Activated naive CD4-positive, alpha-beta T cell treated with anti-CD3 and anti-CD28 coated beads for 36 hours (primary cell): ENCODE measurements at regions of chr19 and their contacts with region 1.

Region 1: DNA sequence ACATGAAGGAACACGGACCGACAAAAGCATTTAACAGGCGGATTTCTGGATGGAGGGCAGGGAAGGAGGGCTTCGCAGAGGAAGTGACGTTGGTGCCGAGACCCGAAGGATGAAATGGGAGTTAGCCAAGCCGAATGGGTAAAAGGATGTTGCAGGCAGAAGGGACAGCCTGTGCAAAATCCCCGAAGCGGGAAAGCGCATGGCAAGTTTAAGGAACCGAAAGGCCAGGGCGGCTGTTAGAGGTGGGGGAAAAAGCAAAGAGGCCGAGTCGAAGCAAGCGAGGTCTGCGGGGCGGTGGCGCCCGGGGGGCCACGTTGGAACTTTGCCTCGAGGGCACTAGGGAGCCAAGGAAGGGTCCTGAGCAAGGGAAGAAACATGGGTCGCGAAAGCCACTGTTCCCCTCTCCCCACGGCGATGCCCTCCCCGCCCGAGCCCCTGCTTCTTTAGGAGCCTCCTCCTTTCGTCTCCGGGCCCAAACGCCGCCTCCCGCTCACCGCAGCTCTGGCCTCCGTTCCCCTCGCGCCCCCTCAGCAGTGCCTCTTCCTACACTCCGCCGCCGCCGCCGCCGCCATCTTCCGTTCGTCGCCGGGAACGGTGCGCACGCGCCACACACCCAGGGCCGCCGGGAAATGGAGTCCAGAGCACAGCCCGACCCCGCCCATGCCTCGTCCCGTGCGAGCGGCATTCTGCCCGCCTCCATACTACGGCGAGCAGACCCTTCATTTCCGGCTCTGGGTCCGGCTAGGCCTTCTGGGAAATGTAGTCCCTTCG is at the start of gene SYMPK:
- DNase-seq: peak; percentile 99
- H3K4me3 Mint-ChIP-seq: peak within 1 kb of the TSS; percentile 88
- H3K27ac Mint-ChIP-seq: peak within 1 kb of the TSS; percentile 94
- H3K4me1 Mint-ChIP-seq: peaks cover 24% of the 10 kb centered on the region
- H3K27me3 Mint-ChIP-seq: peaks cover 23% of the 10 kb centered on the region
- total RNA-seq, gene SYMPK: 96.9 to 97.4 TPM

Region 2: GRCh38 chr19:45469132-45469944 is 393.4 kb before region 1 on chr19:
- CTCF ChIA-PET with region 1: no interaction called
- intact Hi-C with region 1: loop called (anchors 2 kb)
- DNase-seq: peak; percentile 91
- H3K4me3 Mint-ChIP-seq: peak overlapping the region; percentile 77
- H3K27ac Mint-ChIP-seq: peak overlapping the region; percentile 75
- H3K4me1 Mint-ChIP-seq: peaks cover 42% of the 10 kb centered on the region
- H3K27me3 Mint-ChIP-seq: peaks cover 26% of the 10 kb centered on the region

Region 3: DNA sequence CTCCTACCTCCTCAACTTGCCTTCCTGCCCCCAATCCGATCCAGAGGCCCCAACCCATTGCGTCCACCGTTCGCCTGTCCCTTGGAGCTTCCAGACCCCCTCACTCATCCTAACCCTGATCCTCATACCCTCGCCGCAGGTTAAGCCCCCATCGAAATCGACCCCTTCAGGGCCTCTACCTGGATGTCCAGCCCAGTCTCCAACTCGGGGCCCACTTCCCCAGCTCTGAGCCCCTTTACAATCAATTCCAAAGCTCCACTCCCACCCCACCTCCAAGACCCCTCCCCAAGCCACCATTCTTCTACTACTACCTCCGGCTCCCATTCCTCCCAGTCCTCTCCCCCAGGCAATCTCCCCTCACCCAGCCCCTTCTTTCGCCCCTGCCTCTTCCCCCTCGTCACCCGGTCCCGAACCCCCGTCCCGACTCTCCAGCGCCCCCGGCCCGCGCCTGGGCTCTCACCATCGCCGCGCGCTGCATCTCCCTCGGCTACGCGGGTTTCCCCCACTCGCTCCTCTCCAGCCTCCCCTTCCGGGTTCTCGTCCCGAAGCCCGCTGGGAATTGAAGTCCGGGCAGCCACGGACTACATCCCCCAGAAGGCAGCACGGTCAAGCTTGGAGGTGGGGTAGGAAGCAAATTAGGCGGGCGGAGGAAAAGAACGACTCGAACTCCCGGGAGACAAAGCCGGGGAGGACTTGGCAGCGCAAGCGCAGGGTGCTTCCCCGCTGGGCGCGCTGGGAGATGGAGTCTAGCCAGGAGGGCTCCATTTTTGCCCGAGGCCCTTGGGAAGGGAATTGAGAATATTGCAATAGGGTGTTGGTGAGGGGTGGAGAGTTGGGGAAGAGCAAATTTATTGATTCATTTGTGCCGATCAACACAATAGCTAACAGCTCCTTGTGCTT is 132.1 kb before region 1 on chr19 and contains the start of gene FBXO46:
- CTCF ChIA-PET with region 1: interaction called, 4 read pairs
- intact Hi-C with region 1: loop called (anchors 1 kb)
- DNase-seq: peak; percentile 99
- H3K4me3 Mint-ChIP-seq: peak within 1 kb of the TSS; percentile 95
- H3K27ac Mint-ChIP-seq: peak within 1 kb of the TSS; percentile 83
- H3K4me1 Mint-ChIP-seq: peaks cover 29% of the 10 kb centered on the region
- H3K27me3 Mint-ChIP-seq: no peaks in the 10 kb centered on the region
- total RNA-seq, gene FBXO46: 21.8 to 23.2 TPM

Region 4: GRCh38 chr19:45817010-45817724 is 45.6 kb before region 1 on chr19:
- CTCF ChIA-PET with region 1: interaction called, 4 read pairs
- intact Hi-C with region 1: loop called (anchors 1 kb)
- DNase-seq: peak; percentile 99
- H3K4me3 Mint-ChIP-seq: no peak overlapping the region
- H3K27ac Mint-ChIP-seq: no peak overlapping the region
- H3K4me1 Mint-ChIP-seq: peaks cover 10% of the 10 kb centered on the region
- H3K27me3 Mint-ChIP-seq: peaks cover 19% of the 10 kb centered on the region

Region 5: GRCh38 chr19:45902651-45903625 is 40.2 kb after region 1 on chr19:
- CTCF ChIA-PET with region 1: interaction called, 6 read pairs
- intact Hi-C with region 1: loop called (anchors 1 kb)
- DNase-seq: peak; percentile 99
- H3K4me3 Mint-ChIP-seq: peak overlapping the region; percentile 88
- H3K27ac Mint-ChIP-seq: peak overlapping the region; percentile 71
- H3K4me1 Mint-ChIP-seq: peaks cover 12% of the 10 kb centered on the region
- H3K27me3 Mint-ChIP-seq: no peaks in the 10 kb centered on the region

Region 6: GRCh38 chr19:46016426-46017094 is 153.8 kb after region 1 on chr19:
- CTCF ChIA-PET with region 1: interaction called, 8 read pairs
- intact Hi-C with region 1: loop called (anchors 2 kb)
- DNase-seq: peak; percentile 86
- H3K4me3 Mint-ChIP-seq: peak overlapping the region; percentile 74
- H3K27ac Mint-ChIP-seq: peak overlapping the region; percentile 62
- H3K4me1 Mint-ChIP-seq: peaks cover 17% of the 10 kb centered on the region
- H3K27me3 Mint-ChIP-seq: peaks cover 15% of the 10 kb centered on the region

Region 7: DNA sequence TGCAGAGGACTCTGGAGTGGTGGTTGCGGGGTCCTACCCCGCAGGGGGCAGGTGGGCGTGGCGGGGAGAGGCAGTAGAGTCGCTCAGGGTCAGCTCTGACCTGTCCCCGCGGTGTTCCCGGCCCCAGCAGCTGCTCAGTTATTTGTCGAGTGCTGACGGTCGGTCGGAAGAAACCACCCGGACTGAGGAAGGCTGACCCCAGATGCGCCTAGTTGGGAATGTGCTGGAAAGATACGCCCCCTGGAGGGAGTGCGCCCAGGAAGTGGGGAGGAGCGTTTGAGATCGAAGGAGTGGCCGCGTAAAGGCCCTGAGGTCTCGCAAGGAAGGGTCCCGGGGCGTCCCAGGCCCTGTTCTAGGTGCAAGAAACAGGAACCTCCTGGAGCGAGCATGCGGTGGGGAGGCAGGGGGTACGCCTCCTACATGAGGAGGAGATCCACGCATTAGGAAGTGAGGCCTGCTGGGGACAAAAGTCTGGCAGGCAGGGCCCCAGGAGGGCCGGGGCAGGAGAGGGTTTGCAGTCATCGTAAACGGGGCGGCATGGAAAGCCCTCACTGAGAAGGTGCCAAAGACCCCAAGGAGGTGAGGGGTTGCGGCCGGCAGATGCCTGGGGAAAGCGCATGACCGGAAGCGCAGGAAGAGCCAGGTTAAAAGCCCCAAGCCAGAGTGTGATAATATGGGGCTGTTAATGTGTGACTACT is 541.5 kb after region 1 on chr19:
- CTCF ChIA-PET with region 1: no interaction called
- intact Hi-C with region 1: no loop called
- DNase-seq: no peak
- H3K4me3 Mint-ChIP-seq: peak overlapping the region; percentile 54
- H3K27ac Mint-ChIP-seq: no peak overlapping the region
- H3K4me1 Mint-ChIP-seq: peaks cover 17% of the 10 kb centered on the region
- H3K27me3 Mint-ChIP-seq: peaks cover 63% of the 10 kb centered on the region